Motor neuron (in vitro differentiated cells): ENCODE measurements at regions of chr11 and their contacts with region 1.

Region 1: DNA sequence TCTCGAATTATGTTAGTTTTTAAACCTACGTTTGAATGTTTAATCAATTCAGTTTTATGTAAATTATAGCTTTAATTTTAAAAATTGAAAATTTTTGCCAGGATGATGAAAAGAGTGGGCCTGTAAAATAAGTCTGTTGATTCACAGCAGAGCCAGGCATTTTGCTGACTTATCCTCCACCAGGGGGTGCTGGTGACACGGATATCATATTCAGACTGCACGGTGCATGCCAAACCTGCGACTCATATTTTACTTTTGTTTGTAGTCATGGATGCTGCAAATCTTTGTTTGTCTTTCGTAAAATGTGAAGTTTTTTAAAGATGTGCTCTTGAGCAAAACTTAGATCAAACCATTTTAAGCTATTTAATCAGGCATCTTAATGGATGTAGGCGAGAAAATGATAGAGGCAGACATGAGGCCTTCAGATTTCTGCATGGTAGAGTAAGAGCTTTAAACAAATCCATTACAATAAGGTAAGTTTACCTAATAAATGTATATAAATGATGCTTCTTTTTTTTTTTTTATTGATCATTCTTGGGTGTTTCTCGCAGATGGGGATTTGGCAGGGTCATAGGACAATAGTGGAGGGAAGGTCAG is 3.6 kb upstream of the OR8B3 start:
- ATAC-seq: peak in 4 of 8 experiments; percentile 38 to 98 (median 90)
- H3K4me3 ChIP-seq: no peak overlapping the region
- H3K27ac ChIP-seq: no peak overlapping the region
- H3K4me1 ChIP-seq: no peaks in the 10 kb centered on the region

Region 2: DNA sequence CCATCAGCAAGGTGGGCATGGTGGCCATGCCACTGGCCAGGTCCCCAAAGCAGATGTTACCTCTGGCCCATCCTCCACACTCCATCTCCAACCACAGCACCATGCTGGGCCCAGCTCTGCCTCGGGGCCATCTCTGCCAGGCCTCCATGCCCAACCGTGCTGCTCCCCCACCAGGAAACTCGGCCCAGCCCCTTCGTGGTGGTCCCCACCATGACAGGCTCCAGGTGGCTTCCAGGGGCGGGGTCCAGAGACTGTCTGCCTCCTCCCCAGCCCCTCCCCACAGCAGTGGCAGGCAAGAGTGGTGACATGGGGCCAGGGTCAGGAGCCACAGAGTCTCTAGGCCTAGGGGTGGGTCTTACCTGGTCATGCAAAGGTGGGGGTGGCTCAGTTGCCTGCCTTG is 192.0 kb before region 1 on chr11:
- in situ Hi-C with region 1: no loop called
- ATAC-seq: no peak
- H3K4me3 ChIP-seq: no peak overlapping the region
- H3K27ac ChIP-seq: no peak overlapping the region
- H3K4me1 ChIP-seq: no peaks in the 10 kb centered on the region

Region 3: DNA sequence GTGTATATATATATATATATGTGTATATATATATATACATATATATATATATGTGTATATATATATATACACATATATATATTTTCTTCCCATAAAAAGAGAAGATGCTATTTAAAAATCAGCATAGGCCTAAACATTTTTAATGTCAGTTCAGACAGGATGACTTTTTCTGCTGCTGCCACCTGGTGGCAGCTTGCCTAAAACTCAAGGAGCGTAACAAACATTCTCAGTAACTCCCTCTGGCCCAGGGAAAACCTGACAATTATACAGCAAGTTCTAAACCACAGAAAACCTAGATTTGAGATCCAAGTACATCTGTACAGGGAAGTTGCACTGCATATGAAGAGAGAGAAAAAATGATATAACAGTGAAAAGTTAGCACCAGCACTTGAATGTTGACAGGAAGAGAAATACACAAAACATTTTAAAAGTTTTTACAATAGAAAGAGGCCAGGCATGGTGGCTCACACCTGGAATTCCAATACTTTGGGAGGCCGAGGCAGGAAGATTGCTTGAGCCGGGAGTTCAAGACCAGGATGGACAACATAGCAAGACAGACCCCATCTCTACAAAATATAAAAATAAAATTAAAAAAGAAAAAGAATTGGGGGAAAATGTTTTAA is 183.9 kb after region 1 on chr11:
- in situ Hi-C with region 1: loop called in 5 of 9 experiments (anchors 25 kb)
- ATAC-seq: peak in 5 of 8 experiments; percentile 31 to 67 (median 61)
- H3K4me3 ChIP-seq: no peak overlapping the region
- H3K27ac ChIP-seq: no peak overlapping the region
- H3K4me1 ChIP-seq: no peaks in the 10 kb centered on the region

Region 4: DNA sequence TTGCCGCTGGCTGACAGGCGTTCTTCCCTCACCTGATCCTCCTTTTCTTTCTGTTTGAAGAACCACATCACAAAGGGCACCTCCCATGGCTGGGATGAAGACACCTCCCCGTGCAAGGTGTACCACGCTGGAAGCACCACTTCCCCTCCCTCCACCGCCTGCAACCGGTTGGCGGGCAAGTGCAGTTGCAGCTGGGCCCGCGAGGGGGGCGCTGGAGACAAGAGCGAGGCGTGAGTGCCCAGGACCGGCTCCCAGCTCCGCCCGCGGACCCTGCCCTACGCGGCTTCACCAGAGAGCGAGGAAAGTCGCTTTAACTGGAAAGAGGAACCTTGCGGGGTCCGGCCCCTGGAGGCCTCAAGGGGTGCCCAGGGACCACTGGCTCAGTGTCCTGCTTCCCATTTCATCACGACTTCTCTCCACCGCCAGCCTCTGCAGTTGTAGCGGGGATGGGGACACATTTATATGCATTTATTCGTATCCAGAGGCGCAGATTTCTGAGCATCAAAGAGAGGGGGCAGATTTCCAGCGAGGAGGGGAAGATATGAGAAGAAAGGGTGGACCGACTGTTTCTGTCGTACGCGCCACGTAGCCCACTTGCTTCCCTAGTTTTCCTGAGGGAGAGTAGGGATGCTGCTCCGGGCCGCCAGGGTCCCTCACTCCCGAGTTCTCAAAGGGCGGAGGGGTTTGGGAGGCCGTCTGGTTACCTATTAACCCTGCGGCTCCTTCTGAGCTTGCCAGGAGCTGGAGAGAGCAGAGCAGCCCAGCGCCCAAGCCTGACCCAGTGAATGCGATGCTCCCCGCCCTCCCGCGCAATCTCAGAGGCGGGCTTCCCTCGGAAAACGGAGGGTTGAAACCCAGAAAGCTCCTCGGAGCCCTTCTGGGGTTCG is 356.1 kb after region 1 on chr11:
- in situ Hi-C with region 1: loop called in 2 of 9 experiments (anchors 25 kb)
- ATAC-seq: peak; percentile 24 to 90 (median 84)
- H3K4me3 ChIP-seq: peak overlapping the region; percentile 10 to 35 (median 26)
- H3K27ac ChIP-seq: no peak overlapping the region
- H3K4me1 ChIP-seq: peaks cover 5 to 25% of the 10 kb centered on the region in 2 donors

Region 5: DNA sequence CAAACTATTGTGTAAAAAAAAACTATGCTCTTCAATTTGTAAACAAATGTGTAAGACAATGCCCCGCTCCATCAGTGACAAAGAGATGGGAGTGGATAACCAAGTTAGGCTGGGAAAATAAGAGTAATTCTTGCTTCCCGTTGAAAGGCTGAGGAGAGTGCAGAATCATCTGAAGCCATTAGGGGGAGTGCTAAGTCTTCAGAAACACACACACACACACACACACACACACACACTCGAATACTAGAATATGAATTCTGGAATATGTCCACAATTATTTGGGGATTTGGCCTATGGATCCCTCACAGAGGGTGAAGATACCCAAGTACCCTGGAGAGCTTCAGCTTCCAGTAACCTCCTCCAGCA is 435.1 kb after region 1 on chr11:
- in situ Hi-C with region 1: loop called in 1 of 9 experiments (anchors 25 kb)
- ATAC-seq: peak in 4 of 8 experiments; percentile 28 to 58 (median 50)
- H3K4me3 ChIP-seq: no peak overlapping the region
- H3K27ac ChIP-seq: no peak overlapping the region
- H3K4me1 ChIP-seq: peaks cover 27 to 37% of the 10 kb centered on the region in 2 donors